GM10248 (cell line): ENCODE measurements at regions of chr7 and their contacts with region 1.

Region 1: DNA sequence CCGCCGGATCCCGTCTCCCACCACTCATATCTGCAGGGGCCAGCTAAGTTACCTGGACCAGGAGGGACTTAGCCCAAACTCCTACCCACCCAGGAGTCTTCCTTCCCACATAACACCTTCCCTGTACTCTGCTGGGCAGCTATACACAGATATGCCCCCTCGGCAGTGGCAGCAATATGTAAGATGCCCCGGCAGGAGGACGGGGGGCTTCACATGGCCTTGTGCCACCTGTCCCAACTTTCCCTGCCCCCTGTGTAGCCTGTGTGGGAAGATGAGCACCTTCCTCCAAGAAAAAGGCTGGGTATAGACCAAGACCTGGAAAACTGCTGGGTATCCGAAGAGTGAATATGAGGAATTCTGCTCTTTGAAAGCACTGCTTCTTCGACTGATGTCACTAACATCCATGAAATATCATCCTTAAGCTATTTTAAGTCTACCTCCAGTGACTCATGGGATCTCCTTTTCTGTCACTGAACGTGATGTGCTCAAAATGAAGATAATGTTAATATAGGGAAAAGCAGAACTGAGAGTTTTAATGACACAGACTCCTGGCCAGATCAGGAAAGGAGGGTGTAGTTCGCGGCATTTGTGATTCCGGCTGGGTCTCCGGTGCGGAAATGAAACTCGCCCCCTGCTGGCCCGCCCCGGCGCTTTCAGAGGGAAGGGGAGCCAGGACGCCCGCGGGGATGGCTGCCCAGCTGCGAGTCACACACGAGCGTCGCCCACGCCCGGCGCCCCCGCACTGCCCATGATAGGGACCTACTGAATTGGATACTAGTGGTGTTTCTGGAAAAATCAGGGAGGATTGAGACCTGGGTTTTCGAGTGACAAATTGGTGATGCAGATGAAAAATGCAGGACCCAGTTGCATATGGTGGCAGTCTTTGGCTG is 256.9 kb upstream of the NFE2L3 start:
- DNase-seq: peak; percentile 81
- CTCF ChIP-seq: peak; percentile 57

Region 2: DNA sequence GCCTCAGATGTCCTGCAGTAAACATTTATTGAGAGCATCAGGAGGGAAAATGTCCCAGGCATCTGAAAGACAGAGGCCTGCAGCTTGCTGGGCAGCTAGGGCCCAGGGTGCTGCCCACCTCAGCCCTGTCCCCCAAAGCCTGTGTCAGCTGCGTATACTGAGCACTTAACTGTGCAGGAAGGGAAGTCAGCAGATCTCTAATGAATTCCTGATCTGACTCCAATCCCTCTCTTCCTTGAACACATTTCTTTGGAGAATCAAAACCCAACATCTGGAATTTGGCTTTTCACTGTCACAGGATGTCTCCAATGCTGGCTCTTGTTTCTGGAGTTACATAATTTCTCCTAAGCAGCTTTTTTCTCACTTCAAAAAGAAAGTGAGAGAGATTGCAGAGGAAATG is 107.8 kb before region 1 on chr7:
- CTCF ChIA-PET with region 1: no interaction called
- POLR2A ChIA-PET with region 1: no interaction called
- DNase-seq: no peak
- CTCF ChIP-seq: no peak

Region 3: GRCh38 chr7:25805027-25805687 is 90.0 kb before region 1 on chr7:
- CTCF ChIA-PET with region 1: no interaction called
- POLR2A ChIA-PET with region 1: no interaction called
- DNase-seq: no peak
- CTCF ChIP-seq: no peak

Region 4: DNA sequence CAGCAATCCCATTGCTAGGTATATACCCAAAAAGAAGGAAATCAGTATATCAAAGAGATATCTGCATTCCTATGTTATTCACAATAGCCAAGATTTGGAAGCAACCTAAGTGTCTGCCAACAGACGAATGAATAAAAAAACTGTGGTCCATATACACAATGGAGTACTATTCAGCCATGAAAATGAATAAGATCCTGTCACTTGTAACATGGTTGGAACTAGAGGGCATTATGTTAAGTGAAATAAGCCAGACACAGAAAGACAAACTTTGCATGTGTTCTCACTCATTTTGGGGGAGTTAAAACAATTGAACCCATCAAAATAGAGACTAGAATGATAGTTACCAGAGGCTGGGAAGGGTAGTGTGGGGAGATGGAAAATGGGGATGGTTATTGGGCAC is 66.7 kb before region 1 on chr7:
- CTCF ChIA-PET with region 1: no interaction called
- POLR2A ChIA-PET with region 1: no interaction called
- DNase-seq: no peak
- CTCF ChIP-seq: no peak

Region 5: DNA sequence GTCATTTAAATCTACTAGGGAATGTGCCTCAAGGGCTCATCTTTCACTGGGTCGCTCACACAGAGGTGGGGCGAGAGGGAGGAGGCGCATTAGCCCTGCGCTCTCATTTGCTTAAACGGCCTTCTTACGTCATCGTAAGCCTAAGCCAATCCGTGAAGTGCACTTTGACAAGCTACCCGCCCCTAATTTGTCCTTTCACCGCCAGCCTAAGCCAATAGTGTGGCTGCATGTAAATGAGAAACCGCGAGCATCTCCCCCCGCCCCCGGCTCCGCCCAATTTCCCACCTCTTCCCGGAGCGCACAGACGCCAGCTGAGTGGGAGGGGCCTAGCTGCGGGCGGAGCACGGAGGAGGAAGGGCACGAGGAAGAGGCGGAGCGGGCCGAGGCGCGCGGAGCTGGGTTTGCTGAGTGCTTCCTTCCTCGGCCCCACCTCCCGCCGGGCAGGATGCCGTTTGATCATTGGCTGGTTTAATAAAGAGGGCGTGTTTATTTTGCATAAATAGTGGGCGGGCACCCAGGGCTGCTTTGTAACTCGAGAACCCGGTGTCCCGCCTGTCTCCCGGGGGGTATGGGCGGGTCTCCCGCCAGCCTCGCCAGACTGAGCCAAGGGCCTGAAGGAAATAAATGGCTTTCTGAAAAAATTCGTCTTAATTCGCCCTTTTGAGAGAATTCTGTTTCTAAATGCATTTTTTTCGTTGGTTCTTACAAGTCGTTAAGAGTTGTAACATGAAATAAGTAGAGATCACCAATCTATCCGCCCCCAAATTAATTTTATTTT is 32.7 kb before region 1 on chr7:
- CTCF ChIA-PET with region 1: interaction called, 12 read pairs
- POLR2A ChIA-PET with region 1: no interaction called
- DNase-seq: peak; percentile 91
- CTCF ChIP-seq: no peak

Region 6: GRCh38 chr7:25968205-25968993 is 73.3 kb after region 1 on chr7:
- CTCF ChIA-PET with region 1: interaction called, 15 read pairs
- POLR2A ChIA-PET with region 1: no interaction called
- DNase-seq: peak; percentile 64
- CTCF ChIP-seq: no peak

Region 7: DNA sequence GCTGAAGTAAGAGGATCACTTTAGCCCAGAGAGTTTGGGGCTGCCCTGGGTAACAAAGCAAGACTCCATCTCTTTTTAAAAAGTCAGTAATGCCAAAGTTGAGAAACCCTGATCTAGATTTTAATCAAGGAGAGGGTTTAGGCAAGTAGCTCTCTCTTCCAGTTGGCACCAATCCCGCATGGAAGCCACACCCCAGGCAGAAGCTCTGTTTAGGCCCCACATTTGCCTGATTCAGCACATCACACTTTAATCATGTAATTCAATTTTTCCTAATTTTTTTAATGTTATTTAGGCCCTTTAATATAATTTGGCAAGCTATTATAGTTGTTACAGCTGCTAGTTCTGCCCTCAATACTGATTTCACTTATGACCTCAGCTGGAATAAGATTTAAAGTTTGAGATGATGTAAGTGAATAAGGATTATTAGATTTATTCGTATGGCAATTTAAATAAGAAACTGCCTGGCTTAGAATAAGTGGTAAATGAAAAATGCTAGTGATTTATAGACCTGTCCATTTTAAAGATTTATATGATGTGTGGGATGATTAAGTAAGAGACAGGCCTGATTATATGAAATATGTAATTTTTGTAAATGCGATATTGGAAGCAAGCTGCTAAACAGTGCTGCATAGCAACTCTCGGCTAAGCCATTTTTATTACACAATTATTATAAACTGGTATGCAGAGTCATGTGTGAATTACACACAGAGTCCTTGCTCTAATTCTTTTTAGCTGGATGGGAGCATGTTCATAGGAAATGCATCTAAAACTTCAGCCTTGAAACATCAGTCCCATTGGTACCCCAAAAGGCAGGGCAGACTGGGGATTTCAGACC is 176.7 kb after region 1 on chr7:
- CTCF ChIA-PET with region 1: interaction called, 26 read pairs
- POLR2A ChIA-PET with region 1: no interaction called
- DNase-seq: no peak
- CTCF ChIP-seq: no peak

Region 8: DNA sequence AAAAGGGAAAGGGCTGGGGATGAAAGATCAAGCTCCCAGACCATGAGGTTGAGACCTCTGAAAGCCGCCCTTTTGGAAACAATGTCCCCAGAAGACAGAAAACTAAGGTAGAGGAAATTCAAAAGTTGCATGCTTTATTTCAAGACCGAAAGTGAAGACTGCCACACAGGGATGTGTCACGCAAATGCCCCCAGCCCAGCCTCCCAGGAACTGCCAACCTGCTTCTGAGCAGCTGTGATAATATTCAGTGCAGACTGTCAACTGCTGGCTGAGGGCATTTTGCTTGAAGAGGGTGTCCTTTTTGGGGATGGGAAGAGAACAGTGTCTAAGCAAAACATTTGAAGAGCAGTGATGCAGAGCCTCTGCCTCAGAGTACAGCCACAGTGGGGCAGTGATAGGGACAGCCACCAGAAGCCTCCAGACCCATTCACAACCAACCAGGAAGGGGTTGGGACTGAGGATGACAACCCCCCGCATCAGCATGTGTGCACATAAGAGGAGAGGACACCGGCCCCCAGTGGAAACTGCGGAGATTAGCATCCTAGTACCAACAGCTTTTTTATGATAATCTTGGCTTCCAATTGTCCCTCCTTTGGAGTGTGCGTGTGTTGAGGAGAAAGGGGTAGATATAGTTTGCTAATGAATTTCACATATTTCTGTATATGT is 222.1 kb after region 1 on chr7:
- CTCF ChIA-PET with region 1: no interaction called
- POLR2A ChIA-PET with region 1: no interaction called
- DNase-seq: no peak
- CTCF ChIP-seq: no peak

Region 9: DNA sequence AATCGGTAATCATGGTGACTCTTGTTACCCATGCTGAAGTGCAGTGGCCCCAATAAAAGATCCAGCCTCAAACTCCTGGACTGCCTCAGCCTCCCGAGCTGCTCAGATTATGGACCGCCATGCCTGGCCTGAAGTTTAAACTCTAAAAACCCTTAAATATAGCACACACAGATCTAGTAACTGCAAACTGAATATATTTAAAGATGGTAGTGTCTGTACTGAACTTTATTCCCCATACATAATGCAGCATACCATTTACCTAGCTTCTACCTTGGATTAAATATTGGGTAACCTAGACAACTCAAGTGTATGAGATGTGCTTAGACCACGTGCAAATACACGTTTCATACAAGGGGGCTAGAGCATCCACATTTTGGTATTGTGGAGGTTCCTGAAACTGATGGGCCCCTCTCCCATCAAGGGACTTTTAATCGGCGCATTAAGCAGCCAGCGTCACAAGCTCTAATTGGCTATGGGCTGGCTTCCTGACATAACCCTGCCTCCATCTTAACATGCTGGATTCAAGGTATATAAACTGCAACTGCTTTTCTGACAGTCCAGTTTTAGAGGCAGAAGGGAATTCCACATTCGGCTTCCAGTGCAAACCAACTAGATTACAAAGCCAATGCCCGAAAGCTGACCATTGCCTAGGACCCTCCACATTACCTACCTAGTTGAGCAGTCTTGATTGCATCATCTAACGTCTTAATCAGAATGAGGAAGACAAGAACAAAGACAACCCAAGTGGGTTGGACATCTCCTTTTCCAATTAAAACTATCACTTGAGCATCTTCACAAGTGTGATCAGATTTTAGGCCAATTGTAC is 292.4 kb after region 1 on chr7:
- CTCF ChIA-PET with region 1: interaction called, 14 read pairs
- POLR2A ChIA-PET with region 1: interaction called, 3 read pairs
- DNase-seq: no peak
- CTCF ChIP-seq: no peak

Region 10: DNA sequence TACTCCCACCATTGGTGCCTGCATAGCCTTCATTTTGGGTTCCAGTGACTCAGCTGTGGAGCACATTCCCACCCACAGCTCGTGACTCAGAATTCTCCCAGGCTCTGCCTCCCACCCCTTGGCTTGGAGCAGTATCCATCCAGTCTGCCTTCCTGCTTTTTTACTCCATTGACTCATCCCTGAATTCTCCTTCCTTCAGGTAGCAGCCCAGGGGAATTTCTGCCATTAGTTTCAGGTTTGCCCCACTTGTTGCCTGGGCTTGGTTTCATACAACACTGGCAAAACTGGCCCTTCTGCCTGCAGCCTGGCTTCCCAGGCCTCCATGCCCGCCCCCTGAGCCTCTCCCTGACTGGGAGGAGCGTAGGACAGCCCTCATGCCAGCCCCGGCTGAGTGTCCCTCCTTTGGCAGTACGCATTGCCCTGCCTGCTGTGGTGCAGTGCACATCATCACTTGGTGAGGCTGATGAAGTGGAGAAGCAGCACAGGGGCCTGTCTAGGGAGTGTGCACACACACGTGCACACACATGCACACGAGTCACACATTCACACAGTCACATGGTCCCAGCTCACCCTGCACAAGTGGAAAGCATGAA is 451.6 kb after region 1 on chr7:
- CTCF ChIA-PET with region 1: interaction called, 16 read pairs
- POLR2A ChIA-PET with region 1: no interaction called
- DNase-seq: no peak
- CTCF ChIP-seq: no peak